ENCODE measurements at regions of chr12 and their contacts with region 1.

Region 1: DNA sequence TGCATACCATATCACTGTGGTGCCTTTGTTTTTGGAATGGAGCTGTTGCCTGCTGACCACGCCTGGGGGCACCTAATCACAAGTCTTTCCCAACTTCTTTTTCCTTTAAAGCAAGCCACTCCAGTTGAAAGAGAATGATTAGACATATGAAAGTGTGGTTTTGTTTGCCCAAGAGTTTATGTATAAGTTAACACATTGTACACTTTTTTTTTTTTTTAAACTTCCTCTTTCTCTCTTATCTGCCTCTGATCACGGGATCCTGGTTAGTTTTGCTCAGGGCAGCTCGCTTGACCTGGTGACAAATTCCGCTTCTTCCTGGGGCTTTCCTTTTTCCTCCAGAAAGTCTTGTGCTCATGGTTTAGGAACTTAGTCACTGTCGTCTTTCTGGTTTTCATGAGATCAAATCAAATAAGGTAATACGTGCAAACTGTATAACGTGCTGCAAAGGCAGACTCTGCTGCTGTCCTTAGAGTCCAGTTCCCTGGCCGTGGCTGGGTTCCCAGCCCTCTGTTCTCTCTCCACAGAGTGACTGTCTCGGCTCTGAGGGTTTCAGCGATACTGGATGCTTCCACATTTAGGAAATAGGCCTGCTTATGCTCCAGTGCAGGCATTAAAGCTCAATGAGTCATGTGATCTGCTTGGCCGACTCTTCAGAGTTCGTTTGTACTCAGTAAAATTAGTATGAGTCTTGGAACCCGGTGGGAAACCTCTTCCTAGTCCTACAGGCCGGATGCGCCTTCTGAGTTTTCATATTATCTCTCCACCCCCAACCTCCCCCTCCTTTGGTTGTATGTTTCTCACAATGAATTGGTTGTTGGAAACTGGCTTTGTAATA is 15.2 kb downstream of the RASSF3 start:
- DNase-seq: peak; percentile 58
- ATAC-seq: peak; percentile 93
- H3K4me3 Mint-ChIP-seq: peak overlapping the region; percentile 68
- H3K27ac Mint-ChIP-seq: peak overlapping the region; percentile 97
- H3K4me1 Mint-ChIP-seq: peaks cover 72% of the 10 kb centered on the region
- H3K27me3 Mint-ChIP-seq: no peaks in the 10 kb centered on the region

Region 2: GRCh38 chr12:64660237-64661018 is 35.0 kb after region 1 on chr12:
- CTCF ChIA-PET with region 1: interaction called, 4 read pairs
- POLR2A ChIA-PET with region 1: no interaction called
- intact Hi-C with region 1: loop called in 1 of 2 experiments (anchors 2 kb)
- DNase-seq: no peak
- ATAC-seq: peak; percentile 40
- H3K4me3 Mint-ChIP-seq: no peak overlapping the region
- H3K27ac Mint-ChIP-seq: peak overlapping the region; percentile 69
- H3K4me1 Mint-ChIP-seq: peaks cover 79% of the 10 kb centered on the region
- H3K27me3 Mint-ChIP-seq: no peaks in the 10 kb centered on the region